K562 (cell line): ENCODE measurements at regions of chr11 and their contacts with region 1.

Region 1: GRCh38 chr11:111601979-111602864 is at the start of gene SIK2:
- DNase-seq: peak; percentile 95 to 96 (median 96)
- ATAC-seq: peak; percentile 93
- H3K4me3 ChIP-seq: peak within 1 kb of the TSS; percentile 66
- H3K27ac ChIP-seq: peak within 1 kb of the TSS; percentile 84
- H3K4me1 ChIP-seq: peaks cover 14 to 17% of the 10 kb centered on the region in 2 experiments; a peak in 4 of 5 replicates
- H3K27me3 ChIP-seq: no peaks in the 10 kb centered on the region
- CTCF ChIP-seq: peak; percentile 90 to 97 (median 96)
- EP300 ChIP-seq: no peak
- POLR2A ChIP-seq: peak; percentile 18; the same call in 1 of the 2 replicates
- RAD21 ChIP-seq: peak; percentile 99
- polyA plus RNA-seq, gene SIK2: 0.74 to 0.77 TPM

Region 2: DNA sequence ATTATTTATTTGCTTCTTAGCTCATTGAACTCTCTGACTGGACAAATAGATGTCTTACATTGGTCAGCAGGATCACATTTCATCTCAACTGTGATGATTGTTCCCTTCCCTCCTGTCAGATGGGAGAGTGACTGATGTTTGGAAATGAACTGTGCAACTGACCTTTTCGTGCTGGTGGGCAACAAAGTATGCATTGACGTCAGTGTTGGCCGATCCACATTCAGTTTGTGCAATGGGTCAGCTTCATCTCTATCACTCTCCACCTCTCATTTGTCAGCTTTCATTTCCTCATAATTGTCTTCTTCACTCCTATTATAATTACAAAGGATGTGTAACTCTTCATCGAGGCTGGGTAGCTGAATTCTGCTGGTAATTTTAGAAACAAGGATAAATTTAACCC is 92.6 kb after region 1 on chr11:
- CTCF ChIA-PET with region 1: no interaction called
- POLR2A ChIA-PET with region 1: no interaction called
- in situ Hi-C with region 1: no loop called
- intact Hi-C with region 1: loop called (anchors 5 kb)
- DNase-seq: peak in 2 of 4 experiments; percentile 29 to 61
- ATAC-seq: no peak
- H3K4me3 ChIP-seq: no peak overlapping the region
- H3K27ac ChIP-seq: no peak overlapping the region
- H3K4me1 ChIP-seq: peaks cover 14 to 38% of the 10 kb centered on the region in 2 experiments; a peak in 4 of 5 replicates
- H3K27me3 ChIP-seq: no peaks in the 10 kb centered on the region
- CTCF ChIP-seq: no peak
- EP300 ChIP-seq: no peak
- POLR2A ChIP-seq: no peak
- RAD21 ChIP-seq: no peak

Region 3: DNA sequence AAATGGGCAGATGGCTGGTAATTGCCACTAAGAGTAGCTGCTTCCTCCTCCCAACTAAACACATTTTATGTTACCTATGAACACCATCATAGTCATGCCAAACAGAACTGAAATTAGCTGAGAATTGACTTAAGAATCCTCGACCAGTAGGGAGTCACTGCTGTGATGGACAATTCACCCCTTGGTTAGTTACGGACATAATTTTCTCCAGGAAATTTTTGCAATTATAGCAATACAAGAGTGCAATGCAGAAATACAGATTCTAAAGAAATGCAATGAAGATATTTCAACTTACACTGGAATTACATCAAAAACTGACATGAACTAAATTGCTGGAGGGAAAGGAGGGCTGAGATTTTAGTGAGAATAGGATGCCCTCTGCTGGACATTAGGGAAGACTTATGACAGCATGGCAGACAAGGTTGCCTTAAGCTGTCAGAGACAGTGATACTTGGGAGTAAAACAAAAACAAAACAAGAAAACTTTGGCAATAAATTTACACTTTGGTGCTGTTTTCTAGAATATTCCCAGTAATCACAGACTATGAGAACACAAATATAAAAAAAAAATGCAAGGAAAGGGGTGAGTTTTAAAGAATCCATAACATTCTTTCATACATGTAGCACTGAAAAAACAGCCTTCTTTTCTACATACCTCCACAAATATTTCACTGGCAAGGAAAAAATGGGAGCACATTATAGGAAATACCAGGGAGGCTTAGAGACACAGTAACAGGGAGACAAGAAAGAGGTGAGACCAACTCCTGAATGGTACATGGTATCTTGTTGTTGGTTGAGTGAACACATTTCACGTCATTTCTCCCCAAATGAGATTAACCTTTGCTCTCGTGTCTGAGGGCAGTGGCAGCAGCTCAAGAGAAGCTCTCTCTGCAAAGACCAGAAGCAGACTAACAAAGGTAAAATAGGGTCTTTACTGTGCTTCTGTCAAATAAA is 175.1 kb after region 1 on chr11:
- CTCF ChIA-PET with region 1: interaction called, 38 read pairs
- POLR2A ChIA-PET with region 1: interaction called, 5 read pairs
- in situ Hi-C with region 1: loop called (anchors 5 kb)
- intact Hi-C with region 1: loop called (anchors 1 kb)
- DNase-seq: peak; percentile 59 to 77 (median 65)
- ATAC-seq: peak; percentile 97
- H3K4me3 ChIP-seq: no peak overlapping the region
- H3K27ac ChIP-seq: 0 out of 3 replicates have a peak overlapping the region, but pooled peaks have one; percentile 6
- H3K4me1 ChIP-seq: no peaks in the 10 kb centered on the region
- H3K27me3 ChIP-seq: no peaks in the 10 kb centered on the region
- CTCF ChIP-seq: peak; percentile 71 to 90 (median 75)
- EP300 ChIP-seq: no peak
- POLR2A ChIP-seq: no peak
- RAD21 ChIP-seq: peak; percentile 95 to 97

Region 4: GRCh38 chr11:111982019-111982464 is 379.8 kb after region 1 on chr11:
- CTCF ChIA-PET with region 1: no interaction called
- POLR2A ChIA-PET with region 1: no interaction called
- in situ Hi-C with region 1: loop called (anchors 10 kb)
- intact Hi-C with region 1: loop called (anchors 10 kb)
- DNase-seq: peak; percentile 57 to 84 (median 65)
- ATAC-seq: peak; percentile 95
- H3K4me3 ChIP-seq: no peak overlapping the region
- H3K27ac ChIP-seq: peak overlapping the region; percentile 62; the same call in 1 of the 3 replicates
- H3K4me1 ChIP-seq: peaks cover 8 to 28% of the 10 kb centered on the region in 2 experiments
- H3K27me3 ChIP-seq: no peaks in the 10 kb centered on the region
- CTCF ChIP-seq: peak; percentile 83 to 91 (median 85)
- EP300 ChIP-seq: no peak
- POLR2A ChIP-seq: no peak
- RAD21 ChIP-seq: peak; percentile 78 to 86

Region 5: DNA sequence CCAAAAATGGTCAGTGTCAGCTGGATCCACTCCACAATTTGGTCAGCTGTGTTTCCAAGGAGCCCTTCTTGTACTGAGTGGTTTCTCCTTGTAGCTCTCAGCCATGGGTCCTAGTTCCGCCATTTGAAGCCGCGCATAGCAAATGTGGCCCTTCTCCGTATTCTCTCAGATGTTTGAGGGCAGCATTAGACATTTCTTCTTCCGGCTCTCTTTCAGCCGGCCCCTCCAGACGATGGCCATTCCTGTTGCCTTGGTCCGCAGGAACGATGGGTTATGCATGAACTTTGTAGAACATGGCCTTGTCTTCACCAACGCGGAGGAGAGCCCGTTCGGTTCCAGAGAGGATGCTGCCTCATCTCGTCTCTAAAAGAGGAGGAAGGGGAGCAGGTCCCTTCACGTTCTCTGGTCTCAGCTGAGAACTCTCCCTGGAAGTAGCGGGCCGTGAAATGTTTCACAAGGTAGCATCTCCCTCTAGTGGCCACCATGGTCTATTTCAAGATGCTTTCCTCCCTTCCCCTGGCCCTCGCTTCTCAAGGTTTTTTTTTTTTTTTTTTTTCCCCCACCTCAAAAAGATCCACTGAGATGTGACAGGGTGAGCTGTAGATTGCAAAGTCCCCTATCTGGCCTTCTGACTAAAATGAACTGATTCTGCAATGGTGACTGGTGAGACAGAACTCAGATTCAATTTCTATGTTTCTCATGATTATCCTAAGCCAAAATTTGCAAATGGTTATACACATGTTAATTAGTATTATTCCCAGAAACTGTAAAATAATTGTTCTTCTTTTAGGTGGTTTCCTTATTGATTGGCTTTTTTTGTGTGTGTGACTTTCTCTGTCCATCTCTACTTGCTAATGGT is 678.3 kb after region 1 on chr11:
- CTCF ChIA-PET with region 1: interaction called, 3 read pairs
- POLR2A ChIA-PET with region 1: no interaction called
- in situ Hi-C with region 1: no loop called
- intact Hi-C with region 1: loop called (anchors 10 kb)
- DNase-seq: peak; percentile 76 to 87 (median 78)
- ATAC-seq: peak; percentile 94
- H3K4me3 ChIP-seq: peak overlapping the region; percentile 23; the same call in 1 of the 2 replicates
- H3K27ac ChIP-seq: no peak overlapping the region
- H3K4me1 ChIP-seq: peaks cover 18 to 19% of the 10 kb centered on the region in 2 experiments
- H3K27me3 ChIP-seq: peaks cover 0 to 7% of the 10 kb centered on the region in 2 experiments; a peak in 1 of 5 replicates
- CTCF ChIP-seq: peak; percentile 78 to 89 (median 84)
- EP300 ChIP-seq: no peak
- POLR2A ChIP-seq: no peak
- RAD21 ChIP-seq: peak; percentile 72 to 81